ENCODE measurements at regions of chr5 and their contacts with region 1.

Region 1: DNA sequence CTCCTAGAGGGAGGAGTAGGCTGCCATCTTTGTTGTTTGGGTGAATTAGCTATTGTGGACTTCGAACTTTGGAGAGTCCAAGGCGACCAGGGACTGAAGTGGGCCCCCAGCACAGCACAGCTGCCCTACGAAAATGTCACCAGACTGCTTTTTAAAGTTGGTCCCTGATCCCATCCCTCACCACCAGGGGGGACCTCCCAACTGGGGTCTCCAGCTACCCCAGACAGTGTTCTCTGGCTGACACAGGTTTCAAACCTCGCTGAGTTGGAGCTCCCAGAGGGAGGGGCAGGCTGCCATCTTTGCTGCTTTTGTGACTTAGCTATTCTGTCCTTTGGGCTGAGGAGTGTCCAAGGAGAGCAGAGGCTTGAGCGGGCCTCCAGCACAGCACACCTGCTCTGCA is 45.7 kb upstream of the ADRB2 start:
- DNase-seq: no peak
- H3K4me3 ChIP-seq: no peak overlapping the region
- H3K27ac ChIP-seq: no peak overlapping the region
- H3K4me1 ChIP-seq: peaks cover 4 to 24% (median 13%) of the 10 kb centered on the region in 4 experiments
- H3K27me3 ChIP-seq: no peaks in the 10 kb centered on the region

Region 2: DNA sequence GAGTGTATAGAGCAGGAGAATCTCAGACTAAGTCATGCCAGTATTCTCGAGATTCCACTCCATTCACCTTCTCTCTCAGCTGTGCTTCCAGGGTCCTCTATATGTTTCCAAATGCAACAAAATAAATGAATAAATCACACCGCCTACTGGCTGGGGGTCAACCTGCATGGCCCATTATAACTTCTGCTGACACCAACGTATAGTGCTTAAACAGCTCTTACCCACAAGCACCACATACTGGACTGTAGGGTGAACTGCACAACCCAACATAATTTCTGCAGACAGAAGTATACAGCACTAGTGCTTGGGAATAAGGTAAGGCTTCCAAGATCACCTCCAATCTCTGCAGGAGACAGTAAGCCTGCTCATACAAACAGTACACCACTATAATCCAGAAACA is 93.3 kb before region 1 on chr5:
- CTCF ChIA-PET with region 1: no interaction called
- POLR2A ChIA-PET with region 1: no interaction called
- DNase-seq: peak; percentile 21 to 55 (median 50)
- H3K4me3 ChIP-seq: no peak overlapping the region
- H3K27ac ChIP-seq: no peak overlapping the region
- H3K4me1 ChIP-seq: no peaks in the 10 kb centered on the region
- H3K27me3 ChIP-seq: no peaks in the 10 kb centered on the region

Region 3: GRCh38 chr5:148791334-148791667 is 10.6 kb after region 1 on chr5:
- CTCF ChIA-PET with region 1: interaction called, 21 read pairs
- POLR2A ChIA-PET with region 1: no interaction called
- DNase-seq: peak in 2 of 3 donors; percentile 23 to 40
- H3K4me3 ChIP-seq: no peak overlapping the region
- H3K27ac ChIP-seq: no peak overlapping the region
- H3K4me1 ChIP-seq: peaks cover 4 to 40% (median 9%) of the 10 kb centered on the region in 4 experiments
- H3K27me3 ChIP-seq: no peaks in the 10 kb centered on the region

Region 4: GRCh38 chr5:148799737-148800527 is 19.2 kb after region 1 on chr5:
- CTCF ChIA-PET with region 1: interaction called, 17 read pairs
- POLR2A ChIA-PET with region 1: no interaction called
- DNase-seq: no peak
- H3K4me3 ChIP-seq: no peak overlapping the region
- H3K27ac ChIP-seq: no peak overlapping the region
- H3K4me1 ChIP-seq: peaks cover 5 to 38% (median 19%) of the 10 kb centered on the region in 4 experiments
- H3K27me3 ChIP-seq: no peaks in the 10 kb centered on the region

Region 5: DNA sequence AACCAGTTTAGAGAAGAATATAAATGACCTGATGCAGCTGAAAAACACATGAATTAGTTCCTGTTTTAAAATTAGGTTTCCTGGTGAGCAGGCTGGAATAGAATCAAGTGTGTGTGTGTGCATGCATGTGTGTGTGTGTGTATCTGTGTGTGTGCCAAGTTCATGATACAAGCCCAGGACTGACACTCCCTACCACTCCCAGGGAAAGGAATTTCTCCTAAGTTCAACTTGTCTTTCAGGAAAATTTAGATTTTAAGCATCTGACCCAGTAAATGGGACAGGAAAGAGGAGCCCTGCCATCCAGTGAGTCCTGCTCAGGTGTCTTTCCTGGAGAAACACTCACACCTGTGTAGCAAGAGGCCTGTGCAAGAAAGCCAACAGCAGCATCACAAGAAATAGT is 293.4 kb after region 1 on chr5:
- CTCF ChIA-PET with region 1: no interaction called
- POLR2A ChIA-PET with region 1: no interaction called
- DNase-seq: peak in 2 of 3 donors; percentile 61 to 74
- H3K4me3 ChIP-seq: no peak overlapping the region
- H3K27ac ChIP-seq: no peak overlapping the region
- H3K4me1 ChIP-seq: peaks cover 4 to 28% (median 22%) of the 10 kb centered on the region in 4 experiments
- H3K27me3 ChIP-seq: no peaks in the 10 kb centered on the region

Region 6: DNA sequence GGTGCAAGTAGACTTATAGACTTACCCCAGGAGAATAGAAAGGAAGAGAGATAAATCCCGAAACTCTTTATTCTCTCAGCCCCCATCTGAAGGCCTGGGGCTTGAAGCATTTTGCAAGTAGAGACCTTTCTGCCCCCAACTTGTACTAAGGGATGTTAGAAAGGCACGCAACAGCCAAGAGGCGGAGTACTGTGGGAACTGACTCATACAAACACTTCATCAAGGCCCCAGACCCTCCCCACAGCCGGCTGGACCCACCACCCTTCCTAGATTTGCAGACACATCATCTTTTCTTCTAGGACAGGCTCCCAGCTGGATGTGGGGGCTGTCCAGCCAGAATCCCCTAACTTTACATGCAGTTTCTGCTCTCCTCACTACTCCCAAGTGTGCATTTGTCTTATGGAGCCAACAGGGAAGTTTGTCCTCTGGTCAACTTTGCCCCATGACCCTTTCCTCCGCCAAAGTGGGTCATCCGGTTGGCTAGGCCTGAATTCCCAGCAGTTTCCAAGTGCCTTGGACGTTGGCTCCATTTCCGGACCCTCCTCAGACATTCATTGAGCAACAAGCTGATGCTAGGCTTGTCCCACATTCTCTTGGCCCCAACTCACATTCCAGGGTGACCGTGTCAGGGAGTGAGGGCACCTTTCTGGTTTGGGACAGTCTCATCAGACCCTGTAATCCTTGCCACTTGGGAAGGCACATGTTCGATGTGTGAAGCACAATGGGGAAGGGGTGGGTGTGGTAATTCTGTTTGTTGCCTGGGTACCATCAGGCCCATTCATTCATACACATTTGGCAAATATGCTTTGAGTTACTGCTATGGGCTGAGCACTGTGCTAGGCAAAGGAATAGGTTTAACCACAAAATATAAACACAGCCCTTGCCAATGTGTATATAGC is 425.2 kb after region 1 on chr5:
- CTCF ChIA-PET with region 1: no interaction called
- POLR2A ChIA-PET with region 1: no interaction called
- DNase-seq: no peak
- H3K4me3 ChIP-seq: no peak overlapping the region
- H3K27ac ChIP-seq: no peak overlapping the region
- H3K4me1 ChIP-seq: peaks cover 0 to 22% (median 7%) of the 10 kb centered on the region in 4 experiments
- H3K27me3 ChIP-seq: no peaks in the 10 kb centered on the region